Activated B cell treated with CpG ODN at 0.5 μM for 24 hours (primary cell): ENCODE measurements at regions of chr15 and their contacts with region 1.

Region 1: DNA sequence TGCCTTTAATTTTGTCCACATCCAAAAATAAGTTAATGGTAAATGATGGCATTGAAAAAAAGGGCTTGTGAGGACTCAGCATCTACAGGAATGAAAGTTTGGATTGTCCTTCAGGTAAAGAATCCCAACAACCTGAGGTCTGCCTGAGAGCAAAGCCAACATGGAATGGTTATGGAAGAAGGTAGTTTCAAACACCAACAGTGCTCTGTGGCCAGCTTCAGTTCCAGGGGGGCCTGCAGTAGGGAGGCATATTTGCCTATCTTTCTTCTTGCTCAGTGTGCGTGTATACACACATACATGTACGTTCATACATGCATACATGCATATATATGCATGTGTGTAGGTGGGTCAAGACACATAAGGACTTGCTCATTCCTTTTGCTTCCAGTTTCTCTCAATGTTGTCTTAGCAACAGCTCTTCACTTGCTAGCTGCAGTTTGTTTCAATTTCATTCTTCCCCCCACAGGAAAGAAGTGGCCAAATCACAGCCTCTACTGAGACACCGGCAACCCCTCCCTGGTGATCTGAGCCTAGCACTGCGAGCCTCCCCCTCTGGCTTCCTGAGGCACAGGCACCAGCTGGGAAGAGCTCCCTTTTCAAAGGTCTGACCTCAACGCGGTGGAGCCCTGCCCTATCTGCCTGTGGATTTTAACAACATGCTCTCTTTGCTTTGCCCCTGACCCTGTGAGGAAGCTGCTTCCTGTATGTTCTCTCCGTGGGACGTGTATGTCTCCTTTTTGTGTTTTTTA is 146.2 kb downstream of the KLF13 start:
- DNase-seq: no peak
- ATAC-seq: peak; percentile 80
- H3K4me3 Mint-ChIP-seq: peak overlapping the region; percentile 80
- H3K27ac Mint-ChIP-seq: peak overlapping the region; percentile 93
- H3K4me1 Mint-ChIP-seq: peaks cover 45% of the 10 kb centered on the region
- H3K27me3 Mint-ChIP-seq: no peaks in the 10 kb centered on the region
- CTCF ChIP-seq: no peak

Region 2: GRCh38 chr15:31442203-31443111 is 30.4 kb before region 1 on chr15:
- CTCF ChIA-PET with region 1: interaction called, 8 read pairs
- POLR2A ChIA-PET with region 1: interaction called, 25 read pairs
- intact Hi-C with region 1: no loop called
- DNase-seq: no peak
- ATAC-seq: no peak
- H3K4me3 Mint-ChIP-seq: peak overlapping the region; percentile 41
- H3K27ac Mint-ChIP-seq: peak overlapping the region; percentile 20
- H3K4me1 Mint-ChIP-seq: peaks cover 59% of the 10 kb centered on the region
- H3K27me3 Mint-ChIP-seq: no peaks in the 10 kb centered on the region
- CTCF ChIP-seq: no peak

Region 3: DNA sequence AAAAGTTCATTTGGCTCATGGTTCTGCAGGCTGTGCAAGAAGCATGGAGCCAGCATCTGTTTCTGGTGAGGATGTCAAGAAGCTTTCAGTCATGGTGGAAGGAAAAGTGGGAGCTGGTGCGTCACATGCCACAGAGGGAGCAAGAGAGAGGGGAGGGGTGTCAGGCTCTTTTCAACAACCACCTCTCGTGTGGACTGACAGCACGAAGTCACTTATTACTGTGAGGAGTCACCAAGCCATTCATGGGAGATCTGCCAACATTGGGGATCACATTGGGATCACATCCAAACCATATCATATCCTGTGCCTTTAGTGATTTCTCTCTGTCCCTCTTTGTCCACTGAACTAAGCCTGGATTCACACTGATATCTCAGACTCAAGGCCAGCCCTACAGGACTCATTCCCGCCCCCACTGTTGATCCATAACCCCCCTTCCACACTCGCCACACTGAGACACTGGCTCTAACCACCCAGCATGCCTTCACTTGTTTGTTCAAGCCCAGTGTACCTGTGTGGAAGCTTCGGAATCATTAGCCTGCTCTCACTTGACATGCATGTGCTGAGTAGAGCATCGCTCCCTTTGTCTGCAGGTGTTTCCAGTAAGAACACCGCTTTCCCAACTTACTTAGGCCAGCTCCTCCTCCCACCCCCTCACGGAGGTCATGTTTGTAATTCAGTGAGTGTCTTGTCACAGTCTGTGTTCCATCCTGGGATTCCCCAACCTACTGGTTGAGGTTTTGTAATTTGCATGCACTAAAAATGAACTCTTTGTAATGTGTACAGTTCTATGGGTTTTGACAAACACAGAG is 14.0 kb before region 1 on chr15:
- CTCF ChIA-PET with region 1: interaction called, 3 read pairs
- POLR2A ChIA-PET with region 1: interaction called, 16 read pairs
- intact Hi-C with region 1: loop called (anchors 2 kb)
- DNase-seq: no peak
- ATAC-seq: peak; percentile 98
- H3K4me3 Mint-ChIP-seq: peak overlapping the region; percentile 64
- H3K27ac Mint-ChIP-seq: peak overlapping the region; percentile 56
- H3K4me1 Mint-ChIP-seq: peaks cover 47% of the 10 kb centered on the region
- H3K27me3 Mint-ChIP-seq: no peaks in the 10 kb centered on the region
- CTCF ChIP-seq: no peak